AG04449 (cell line): ENCODE measurements at regions of chr16 and their contacts with region 1.

Region 1: GRCh38 chr16:69112285-69113129 is 7.1 kb downstream of the HAS3 start:
- DNase-seq: no peak
- H3K4me3 ChIP-seq: no peak overlapping the region
- CTCF ChIP-seq: peak; percentile 89

Region 2: GRCh38 chr16:69039333-69039941 is 73.1 kb before region 1 on chr16:
- CTCF ChIA-PET with region 1: no interaction called
- POLR2A ChIA-PET with region 1: no interaction called
- DNase-seq: no peak
- H3K4me3 ChIP-seq: no peak overlapping the region
- CTCF ChIP-seq: no peak

Region 3: DNA sequence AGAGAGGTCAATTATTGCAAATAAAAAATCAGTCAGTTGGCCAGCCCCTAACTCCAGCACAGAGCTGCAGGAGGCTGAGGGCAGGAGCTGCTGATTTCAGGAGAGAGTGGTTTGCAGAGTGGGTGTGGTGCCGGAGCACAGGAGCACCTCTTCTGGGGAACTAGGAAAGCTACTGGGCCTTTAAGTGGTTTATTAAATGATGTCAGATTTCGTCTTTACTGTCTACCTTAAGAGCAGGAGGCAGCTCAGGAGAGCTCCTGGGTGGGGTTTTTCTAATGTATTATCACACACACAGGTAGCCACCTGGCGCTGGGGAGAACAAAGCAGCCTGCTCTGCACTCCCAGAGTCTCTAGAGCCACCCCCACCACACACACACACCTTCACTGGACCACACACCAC is 18.5 kb before region 1 on chr16:
- CTCF ChIA-PET with region 1: interaction called, 11 read pairs
- POLR2A ChIA-PET with region 1: no interaction called
- DNase-seq: no peak
- H3K4me3 ChIP-seq: no peak overlapping the region
- CTCF ChIP-seq: no peak